Activated T-helper 1 cell treated with anti-CD3 and anti-CD28 coated beads, Interleukin-12 subunit alpha, Interleukin-12 subunit beta, Interleukin-2, Interleukin-4 antibody, amounts not matched to agents 30 ng/mL and 10 ng/mL and 1 ng/mL, durations not matched to agents 14 hours and 24 hours and 36 hours (primary cell): ENCODE measurements at regions of chr2 and their contacts with region 1.

Region 1: GRCh38 chr2:239288951-239289511 is 111.8 kb downstream of the HDAC4 start:
- DNase-seq: peak; percentile 61
- H3K4me3 Mint-ChIP-seq: peak overlapping the region; percentile 77
- H3K27ac Mint-ChIP-seq: peak overlapping the region; percentile 98
- H3K4me1 Mint-ChIP-seq: peaks cover 78% of the 10 kb centered on the region
- H3K27me3 Mint-ChIP-seq: peaks cover 7% of the 10 kb centered on the region

Region 2: DNA sequence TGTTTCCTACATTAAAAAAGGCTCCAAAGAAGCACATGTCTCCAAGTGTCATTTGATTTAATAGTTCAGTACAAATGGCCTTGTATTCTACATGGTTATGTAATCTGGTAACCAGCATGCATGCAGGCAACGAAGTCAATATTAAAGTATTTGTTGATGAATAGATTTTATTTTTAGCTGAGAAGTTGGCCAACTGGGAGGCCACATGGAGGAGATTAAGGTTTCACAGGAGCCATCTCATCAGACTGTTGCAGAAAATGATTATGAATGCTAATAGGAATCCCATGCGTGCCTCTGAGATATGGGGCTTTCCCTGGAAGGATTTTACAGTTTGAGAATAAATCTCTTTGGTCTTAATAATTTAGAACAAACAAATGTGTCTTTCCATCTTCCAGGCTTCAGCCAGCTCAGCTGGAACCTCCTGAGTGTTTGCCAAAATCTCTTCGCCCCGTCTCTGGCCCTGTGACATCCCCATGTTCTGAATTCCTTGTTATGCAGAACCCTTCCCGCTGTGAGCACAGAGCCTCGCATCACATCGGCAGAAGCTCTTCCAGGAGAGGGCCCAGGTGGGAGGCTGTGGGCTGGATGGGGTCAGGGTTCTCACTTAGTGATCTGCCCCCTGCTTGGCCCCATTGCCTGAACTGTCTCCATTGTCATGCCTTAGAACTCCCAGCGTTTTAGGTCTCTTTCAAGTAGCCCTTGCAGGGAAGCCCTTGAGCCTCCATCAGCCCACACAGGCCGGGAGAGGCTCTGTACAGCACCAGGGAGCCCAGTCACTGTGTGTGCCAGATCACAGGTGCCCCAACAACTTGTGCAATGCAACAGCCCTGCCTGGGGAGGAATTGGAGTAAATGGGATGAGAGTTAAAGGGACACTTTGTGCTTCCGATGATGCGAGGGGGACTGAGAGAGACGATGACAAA is 631.6 kb before region 1 on chr2:
- intact Hi-C with region 1: no loop called
- DNase-seq: no peak
- H3K4me3 Mint-ChIP-seq: no peak overlapping the region
- H3K27ac Mint-ChIP-seq: no peak overlapping the region
- H3K4me1 Mint-ChIP-seq: no peaks in the 10 kb centered on the region
- H3K27me3 Mint-ChIP-seq: no peaks in the 10 kb centered on the region

Region 3: DNA sequence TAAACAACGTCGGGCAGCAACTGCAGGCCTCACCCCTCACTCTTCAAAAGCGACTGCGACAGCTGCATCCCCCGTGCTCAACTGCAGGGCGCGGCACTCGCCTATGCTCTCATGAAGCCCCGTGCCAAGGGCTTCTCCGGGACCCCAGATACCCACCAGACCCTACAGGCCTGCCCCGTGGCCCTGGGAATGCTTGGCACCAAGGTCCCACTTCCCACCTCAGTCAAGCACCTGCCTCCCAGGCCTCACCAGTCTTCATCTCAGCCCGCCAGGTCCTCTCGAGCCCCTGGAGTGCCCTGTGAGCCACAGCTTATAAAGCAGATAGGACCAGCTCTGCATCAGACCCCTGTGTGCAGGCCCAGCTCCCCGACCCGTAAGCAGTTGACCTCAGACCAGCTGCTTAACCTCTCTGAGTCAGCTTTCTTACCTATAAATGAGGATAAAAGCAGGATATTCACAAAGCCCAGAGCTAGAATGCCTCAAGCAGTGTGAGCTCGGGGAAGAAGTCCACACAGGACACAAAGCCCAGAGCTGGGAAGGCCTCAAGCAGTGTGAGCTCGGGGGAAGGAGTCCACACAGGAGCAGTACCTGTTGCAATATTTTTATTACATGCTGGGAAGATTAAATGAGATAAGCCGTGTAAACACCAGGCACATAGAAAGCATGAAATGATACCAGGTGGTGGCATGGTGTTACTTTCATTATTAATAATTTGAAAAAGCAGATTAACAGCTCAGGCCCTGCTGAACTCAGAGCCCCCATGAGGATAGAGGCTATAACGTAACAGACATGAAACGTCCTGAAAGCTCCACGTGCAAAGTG is 14.9 kb after region 1 on chr2:
- intact Hi-C with region 1: loop called (anchors 1 kb)
- DNase-seq: no peak
- H3K4me3 Mint-ChIP-seq: peak overlapping the region; percentile 40
- H3K27ac Mint-ChIP-seq: peak overlapping the region; percentile 21
- H3K4me1 Mint-ChIP-seq: peaks cover 41% of the 10 kb centered on the region
- H3K27me3 Mint-ChIP-seq: no peaks in the 10 kb centered on the region

Region 4: GRCh38 chr2:239321596-239322415 is 32.8 kb after region 1 on chr2:
- intact Hi-C with region 1: loop called (anchors 1 kb)
- DNase-seq: peak; percentile 73
- H3K4me3 Mint-ChIP-seq: peak overlapping the region; percentile 76
- H3K27ac Mint-ChIP-seq: peak overlapping the region; percentile 97
- H3K4me1 Mint-ChIP-seq: peaks cover 88% of the 10 kb centered on the region
- H3K27me3 Mint-ChIP-seq: no peaks in the 10 kb centered on the region

Region 5: GRCh38 chr2:239369631-239370161 is 80.7 kb after region 1 on chr2:
- intact Hi-C with region 1: loop called (anchors 1 kb)
- DNase-seq: peak; percentile 83
- H3K4me3 Mint-ChIP-seq: no peak overlapping the region
- H3K27ac Mint-ChIP-seq: peak overlapping the region; percentile 92
- H3K4me1 Mint-ChIP-seq: peaks cover 26% of the 10 kb centered on the region
- H3K27me3 Mint-ChIP-seq: no peaks in the 10 kb centered on the region

Region 6: GRCh38 chr2:239544143-239544917 is 255.3 kb after region 1 on chr2:
- intact Hi-C with region 1: loop called (anchors 5 kb)
- DNase-seq: no peak
- H3K4me3 Mint-ChIP-seq: no peak overlapping the region
- H3K27ac Mint-ChIP-seq: no peak overlapping the region
- H3K4me1 Mint-ChIP-seq: peaks cover 35% of the 10 kb centered on the region
- H3K27me3 Mint-ChIP-seq: peaks cover 27% of the 10 kb centered on the region